Activated B cell treated with CpG ODN at 0.5 μM for 24 hours (primary cell): ENCODE measurements at regions of chr9 and their contacts with region 1.

Region 1: DNA sequence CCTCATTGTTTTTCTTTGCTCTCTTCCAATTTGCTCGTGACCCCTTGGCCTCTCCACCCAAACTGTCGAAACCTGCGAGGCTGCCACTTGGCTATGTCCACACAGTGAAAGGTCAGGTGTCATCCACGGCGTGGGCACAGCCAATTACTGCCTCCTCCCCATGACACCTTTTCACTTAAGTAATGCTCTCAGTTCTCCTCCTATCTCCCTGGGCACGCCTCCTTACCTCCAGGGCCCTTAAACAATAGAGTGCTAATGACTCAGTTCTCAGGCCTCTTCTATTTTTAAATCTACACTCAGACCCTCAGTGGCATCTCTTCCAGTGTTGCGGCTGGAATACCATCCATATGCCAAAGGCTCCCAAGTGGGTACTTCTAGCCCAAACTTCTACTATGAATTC is 256.8 kb downstream of the ROR2 start:
- DNase-seq: no peak
- ATAC-seq: no peak
- H3K4me3 Mint-ChIP-seq: no peak overlapping the region
- H3K27ac Mint-ChIP-seq: no peak overlapping the region
- H3K4me1 Mint-ChIP-seq: peaks cover 2% of the 10 kb centered on the region
- H3K27me3 Mint-ChIP-seq: peaks cover 4% of the 10 kb centered on the region
- CTCF ChIP-seq: no peak

Region 2: DNA sequence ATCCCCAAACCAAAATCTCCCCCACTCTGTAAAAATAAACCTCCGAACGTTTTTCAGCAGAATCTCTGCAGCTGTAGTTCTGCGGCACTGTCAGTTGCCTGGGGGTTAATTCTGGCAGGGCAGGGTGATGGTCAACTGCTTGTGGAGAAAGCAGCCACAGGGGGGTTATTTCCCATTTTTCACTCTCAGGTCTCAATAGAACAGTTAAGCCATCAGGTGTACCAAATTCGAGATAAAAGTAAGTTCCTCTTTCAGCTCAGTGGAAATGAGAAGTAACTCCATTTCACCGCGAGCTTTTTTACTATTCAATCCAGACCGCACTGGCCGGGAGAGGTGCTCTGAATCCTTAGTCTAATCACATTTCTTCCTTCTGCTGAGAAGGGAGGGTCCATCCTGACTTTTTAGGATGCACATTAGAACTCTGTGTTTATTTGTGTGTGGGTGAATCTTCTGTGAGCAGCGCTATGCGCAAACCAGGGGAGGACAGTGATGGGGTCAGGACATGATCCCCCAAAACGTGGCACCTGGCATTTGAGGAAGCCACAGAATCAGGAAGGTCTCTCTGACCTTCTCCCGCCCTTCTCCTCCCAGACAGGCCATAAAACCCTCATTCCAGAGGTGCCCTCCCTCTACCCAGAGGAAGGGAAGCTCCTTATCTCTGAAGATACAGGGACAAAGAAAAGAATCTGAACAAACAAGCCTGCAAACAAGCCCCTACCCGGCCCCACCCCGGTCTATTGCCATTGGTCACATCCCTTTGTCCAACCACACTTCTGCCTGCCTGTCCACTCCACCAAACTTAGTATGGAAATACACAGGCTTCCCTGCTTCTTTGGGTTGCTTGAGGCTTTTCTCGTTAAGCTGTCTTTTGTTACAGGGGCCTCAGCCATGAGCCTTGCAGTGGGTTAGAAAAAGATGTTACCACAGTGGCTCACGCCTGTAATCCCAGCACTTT is 27.8 kb after region 1 on chr9:
- CTCF ChIA-PET with region 1: no interaction called
- POLR2A ChIA-PET with region 1: no interaction called
- intact Hi-C with region 1: no loop called
- DNase-seq: no peak
- ATAC-seq: peak; percentile 83
- H3K4me3 Mint-ChIP-seq: peak overlapping the region; percentile 32
- H3K27ac Mint-ChIP-seq: no peak overlapping the region
- H3K4me1 Mint-ChIP-seq: peaks cover 21% of the 10 kb centered on the region
- H3K27me3 Mint-ChIP-seq: peaks cover 2% of the 10 kb centered on the region
- CTCF ChIP-seq: no peak

Region 3: DNA sequence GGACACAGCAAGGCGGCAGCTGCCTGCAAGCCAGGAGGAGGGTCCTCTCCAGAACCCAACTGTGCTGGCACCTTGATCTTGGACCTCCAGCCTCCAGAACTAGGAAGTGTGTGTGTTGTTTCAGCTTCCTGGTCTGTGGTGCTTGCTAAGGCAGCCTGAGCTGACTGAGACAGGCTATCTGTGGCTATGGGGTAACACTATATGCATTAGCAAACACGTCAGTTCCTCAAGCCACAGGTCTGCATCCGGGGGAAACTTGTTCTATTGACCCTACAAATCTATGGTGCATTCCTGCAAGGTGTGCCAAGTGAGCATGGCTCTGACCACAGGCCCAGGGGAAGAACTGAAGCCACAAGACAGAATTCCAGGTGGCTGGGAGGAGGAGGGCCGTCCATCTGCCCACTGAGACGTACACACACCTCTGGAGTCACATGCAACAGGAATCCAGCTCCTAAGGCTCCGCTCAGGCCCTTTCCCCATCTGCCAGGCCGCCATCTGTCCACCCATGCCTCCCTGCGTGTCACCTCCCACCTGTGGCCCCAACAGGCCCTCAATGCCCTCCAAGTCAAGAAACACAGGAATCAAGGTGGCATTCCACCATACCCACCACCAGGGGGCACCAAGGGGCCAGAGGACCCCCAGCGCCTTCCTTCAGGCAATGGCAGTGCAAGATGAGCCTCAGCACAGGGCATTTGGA is 81.9 kb after region 1 on chr9:
- CTCF ChIA-PET with region 1: no interaction called
- POLR2A ChIA-PET with region 1: no interaction called
- intact Hi-C with region 1: loop called (anchors 2 kb)
- DNase-seq: peak; percentile 46
- ATAC-seq: peak; percentile 75
- H3K4me3 Mint-ChIP-seq: no peak overlapping the region
- H3K27ac Mint-ChIP-seq: no peak overlapping the region
- H3K4me1 Mint-ChIP-seq: no peaks in the 10 kb centered on the region
- H3K27me3 Mint-ChIP-seq: peaks cover 12% of the 10 kb centered on the region
- CTCF ChIP-seq: peak; percentile 89